Activated CD4-positive, alpha-beta T cell treated with anti-CD3 and anti-CD28 coated beads, Interleukin-2, amount 10 ng/mL, durations not matched to agents 7 days and 5 days (primary cell): ENCODE measurements at regions of chr17 and their contacts with region 1.

Region 1: GRCh38 chr17:63946440-63947367 is 14.6 kb upstream of the CD79B start:
- DNase-seq: peak; percentile 64
- H3K4me3 Mint-ChIP-seq: peak overlapping the region; percentile 50
- H3K27ac Mint-ChIP-seq: peak overlapping the region; percentile 87
- H3K4me1 Mint-ChIP-seq: peaks cover 18% of the 10 kb centered on the region
- H3K27me3 Mint-ChIP-seq: peaks cover 11% of the 10 kb centered on the region

Region 2: DNA sequence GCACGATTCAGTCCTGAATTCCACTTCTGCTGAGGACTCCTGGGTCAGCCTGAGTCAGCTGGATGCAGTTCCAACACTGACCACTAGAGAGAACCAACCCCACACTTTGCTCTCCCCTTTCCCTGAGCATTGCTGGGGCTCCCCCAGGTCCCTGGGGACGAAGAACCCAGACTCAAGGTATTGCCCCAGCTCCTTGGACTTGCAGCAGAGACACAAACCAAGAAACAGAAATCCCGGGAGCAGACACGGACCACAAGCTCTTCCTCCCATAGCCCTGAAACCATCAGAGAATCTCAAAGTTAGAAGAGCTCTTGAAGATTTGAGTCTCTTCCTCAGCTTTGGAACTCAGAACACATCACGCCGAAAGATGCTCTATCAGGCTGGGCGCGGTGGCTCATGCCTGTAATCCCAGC is 27.4 kb before region 1 on chr17:
- CTCF ChIA-PET with region 1: interaction called, 35 read pairs
- POLR2A ChIA-PET with region 1: no interaction called
- DNase-seq: peak; percentile 83
- H3K4me3 Mint-ChIP-seq: no peak overlapping the region
- H3K27ac Mint-ChIP-seq: no peak overlapping the region
- H3K4me1 Mint-ChIP-seq: peaks cover 7% of the 10 kb centered on the region
- H3K27me3 Mint-ChIP-seq: peaks cover 4% of the 10 kb centered on the region

Region 3: DNA sequence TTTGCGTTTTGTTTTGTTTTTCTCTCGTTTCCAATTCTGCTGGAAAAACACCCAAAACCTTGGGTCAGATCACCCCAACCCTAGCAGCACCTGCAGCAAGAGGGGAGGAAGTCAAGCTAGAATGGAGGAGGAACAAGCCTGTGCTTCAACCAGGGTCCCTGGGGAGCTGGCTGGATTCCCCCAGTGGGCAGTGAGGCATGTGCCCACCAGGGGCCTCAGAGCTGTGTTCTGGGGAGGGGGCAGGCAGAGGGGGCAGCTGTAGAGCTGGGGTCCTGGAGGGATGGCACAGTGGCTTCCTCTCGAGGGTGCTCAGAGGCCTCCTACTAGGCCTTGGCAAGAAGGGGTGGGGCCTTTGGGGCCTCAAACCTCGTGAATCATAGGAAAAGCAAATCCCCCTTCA is 21.1 kb before region 1 on chr17:
- CTCF ChIA-PET with region 1: interaction called, 38 read pairs
- POLR2A ChIA-PET with region 1: no interaction called
- DNase-seq: no peak
- H3K4me3 Mint-ChIP-seq: no peak overlapping the region
- H3K27ac Mint-ChIP-seq: no peak overlapping the region
- H3K4me1 Mint-ChIP-seq: peaks cover 3% of the 10 kb centered on the region
- H3K27me3 Mint-ChIP-seq: no peaks in the 10 kb centered on the region

Region 4: DNA sequence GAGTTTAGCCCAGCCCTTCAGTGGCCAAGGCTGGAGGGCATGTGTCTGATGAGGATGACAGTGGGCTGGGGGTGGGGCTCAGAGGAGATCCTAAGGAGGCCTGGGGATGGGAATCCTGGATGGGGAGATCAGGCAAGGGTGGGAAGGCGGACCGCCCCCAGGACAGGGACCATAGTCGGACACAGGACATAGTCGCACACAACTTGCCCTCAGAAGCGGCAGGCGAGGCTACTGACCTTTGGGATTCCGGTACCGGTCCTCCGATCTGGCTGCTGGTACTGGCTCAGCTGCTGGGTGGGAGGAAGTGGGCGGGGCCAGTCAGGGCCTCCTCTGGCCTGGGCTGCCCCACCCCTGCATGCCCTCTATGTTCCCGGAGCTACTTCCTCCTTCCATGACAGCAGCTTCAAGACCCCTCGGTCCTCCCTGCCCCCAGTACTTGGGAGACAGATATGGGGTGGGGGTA is 15.6 kb before region 1 on chr17:
- CTCF ChIA-PET with region 1: interaction called, 38 read pairs
- POLR2A ChIA-PET with region 1: no interaction called
- DNase-seq: peak; percentile 65
- H3K4me3 Mint-ChIP-seq: peak overlapping the region; percentile 95
- H3K27ac Mint-ChIP-seq: peak overlapping the region; percentile 95
- H3K4me1 Mint-ChIP-seq: peaks cover 30% of the 10 kb centered on the region
- H3K27me3 Mint-ChIP-seq: peaks cover 4% of the 10 kb centered on the region

Region 5: DNA sequence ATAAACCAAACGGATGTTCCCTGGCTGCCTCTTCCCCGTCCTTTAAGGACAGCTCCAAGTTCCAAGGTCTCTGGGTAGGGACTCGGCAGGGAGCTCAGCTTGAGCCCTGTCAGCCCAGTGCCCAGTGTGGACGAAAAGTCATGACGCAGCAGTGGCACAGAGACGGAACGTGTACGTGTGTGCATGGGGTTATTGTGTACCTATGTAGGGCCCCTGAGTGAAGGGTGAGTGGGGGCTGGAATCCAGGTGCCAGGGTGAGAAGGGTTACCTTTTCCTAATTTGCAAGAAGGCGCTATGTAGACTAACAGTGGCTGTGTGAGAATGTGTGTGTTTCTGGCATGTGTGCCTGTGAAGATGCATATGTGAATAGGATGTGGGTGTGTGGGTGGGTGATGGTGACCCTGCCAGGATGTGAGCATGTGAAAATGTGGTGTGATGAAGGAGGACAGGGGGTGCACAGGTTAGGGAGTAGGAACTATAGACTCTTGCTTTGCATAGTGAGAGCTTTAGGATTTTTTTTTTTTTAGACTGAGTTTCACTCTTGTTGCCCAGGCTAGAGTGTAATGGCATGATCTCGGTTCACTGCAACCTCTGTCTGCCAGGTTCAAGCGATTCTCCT is 20.1 kb after region 1 on chr17:
- CTCF ChIA-PET with region 1: interaction called, 19 read pairs
- POLR2A ChIA-PET with region 1: no interaction called
- DNase-seq: peak; percentile 48
- H3K4me3 Mint-ChIP-seq: no peak overlapping the region
- H3K27ac Mint-ChIP-seq: peak overlapping the region; percentile 9
- H3K4me1 Mint-ChIP-seq: peaks cover 13% of the 10 kb centered on the region
- H3K27me3 Mint-ChIP-seq: peaks cover 2% of the 10 kb centered on the region

Region 6: GRCh38 chr17:63984651-63985386 is 38.1 kb after region 1 on chr17:
- CTCF ChIA-PET with region 1: interaction called, 11 read pairs
- POLR2A ChIA-PET with region 1: no interaction called
- DNase-seq: peak; percentile 79
- H3K4me3 Mint-ChIP-seq: no peak overlapping the region
- H3K27ac Mint-ChIP-seq: peak overlapping the region; percentile 85
- H3K4me1 Mint-ChIP-seq: peaks cover 31% of the 10 kb centered on the region
- H3K27me3 Mint-ChIP-seq: no peaks in the 10 kb centered on the region